ENCODE measurements at regions of chr5 and their contacts with region 1.

Region 1: DNA sequence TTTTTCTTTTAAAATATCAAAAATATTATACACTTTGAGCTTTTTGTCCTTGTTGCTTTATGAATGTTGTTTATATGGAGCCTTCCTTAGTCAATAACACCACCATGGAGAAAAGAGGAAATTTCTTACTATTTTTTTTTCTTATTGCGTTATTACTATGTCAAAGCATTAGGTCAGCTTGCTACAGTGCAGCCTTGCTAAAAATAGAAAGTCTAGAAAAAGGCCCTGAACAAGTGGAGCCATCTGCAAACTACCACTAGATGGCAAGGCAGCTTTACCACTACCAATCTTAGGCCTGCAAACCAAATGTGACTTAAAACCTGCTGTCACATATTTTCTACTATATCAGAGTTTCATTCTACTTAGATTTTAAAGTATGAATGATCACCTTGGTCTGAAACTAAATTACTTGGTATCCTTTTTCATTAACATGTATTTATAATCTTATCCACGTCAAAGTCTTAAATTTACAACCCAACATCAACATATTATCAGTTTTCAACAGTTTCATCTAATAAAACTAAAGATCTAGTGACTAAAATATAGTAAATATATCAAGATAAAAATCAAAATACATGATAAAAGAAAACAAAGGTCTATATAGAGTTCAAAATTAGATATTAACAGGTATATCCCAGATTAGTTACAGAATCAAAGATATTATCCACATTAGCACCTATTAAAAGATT is 113.1 kb upstream of the ACOT12 start:
- DNase-seq: peak; percentile 32
- H3K4me3 Mint-ChIP-seq: no peak overlapping the region
- H3K27ac Mint-ChIP-seq: no peak overlapping the region
- H3K4me1 Mint-ChIP-seq: peaks cover 11% of the 10 kb centered on the region
- H3K27me3 Mint-ChIP-seq: no peaks in the 10 kb centered on the region

Region 2: GRCh38 chr5:81751009-81751835 is 244.2 kb after region 1 on chr5 and contains the start of gene SSBP2:
- intact Hi-C with region 1: loop called (anchors 1 kb)
- DNase-seq: peak; percentile 99
- H3K4me3 Mint-ChIP-seq: peak within 1 kb of the TSS; percentile 92
- H3K27ac Mint-ChIP-seq: peak within 1 kb of the TSS; percentile 93
- H3K4me1 Mint-ChIP-seq: peaks cover 30% of the 10 kb centered on the region
- H3K27me3 Mint-ChIP-seq: peaks cover 15% of the 10 kb centered on the region
- total RNA-seq, gene SSBP2: 24.3 and 29.5 TPM in 2 replicates

Region 3: DNA sequence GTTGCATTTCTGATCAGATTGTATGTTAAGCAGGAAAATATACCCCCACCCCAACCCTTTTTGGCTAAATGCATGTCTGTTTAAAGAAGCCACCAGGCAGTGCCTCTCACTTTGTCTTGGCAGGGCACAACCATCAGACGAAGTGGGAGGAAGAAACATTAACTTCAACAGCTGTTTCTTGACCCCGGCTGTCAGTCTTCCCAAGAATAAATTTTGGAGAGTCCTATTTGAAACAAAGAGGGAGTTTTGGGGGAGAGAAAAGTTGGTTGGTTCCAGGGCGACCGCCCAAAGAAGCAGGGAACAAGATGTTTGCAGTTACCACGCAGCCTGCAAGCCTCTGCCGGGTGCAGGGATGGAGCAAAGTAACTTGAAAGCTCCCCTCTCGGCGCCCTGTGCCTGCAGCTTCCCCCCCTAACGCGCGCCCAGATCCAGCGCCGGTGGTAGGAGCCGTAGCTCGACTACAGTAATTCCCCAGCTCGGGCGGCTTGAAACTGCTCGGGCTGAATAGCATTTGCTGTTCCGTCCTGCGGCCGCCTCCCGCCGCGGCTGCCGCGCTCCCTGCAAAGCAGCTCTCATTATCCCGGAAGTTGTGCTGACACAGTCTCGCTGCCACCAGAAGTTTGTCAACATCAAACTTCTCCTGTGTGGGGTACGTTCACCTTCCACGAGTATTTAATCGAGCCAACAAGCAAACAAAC is 344.6 kb after region 1 on chr5:
- intact Hi-C with region 1: loop called (anchors 1 kb)
- DNase-seq: peak; percentile 88
- H3K4me3 Mint-ChIP-seq: peak overlapping the region; percentile 85
- H3K27ac Mint-ChIP-seq: peak overlapping the region; percentile 94
- H3K4me1 Mint-ChIP-seq: peaks cover 38% of the 10 kb centered on the region
- H3K27me3 Mint-ChIP-seq: no peaks in the 10 kb centered on the region

Region 4: DNA sequence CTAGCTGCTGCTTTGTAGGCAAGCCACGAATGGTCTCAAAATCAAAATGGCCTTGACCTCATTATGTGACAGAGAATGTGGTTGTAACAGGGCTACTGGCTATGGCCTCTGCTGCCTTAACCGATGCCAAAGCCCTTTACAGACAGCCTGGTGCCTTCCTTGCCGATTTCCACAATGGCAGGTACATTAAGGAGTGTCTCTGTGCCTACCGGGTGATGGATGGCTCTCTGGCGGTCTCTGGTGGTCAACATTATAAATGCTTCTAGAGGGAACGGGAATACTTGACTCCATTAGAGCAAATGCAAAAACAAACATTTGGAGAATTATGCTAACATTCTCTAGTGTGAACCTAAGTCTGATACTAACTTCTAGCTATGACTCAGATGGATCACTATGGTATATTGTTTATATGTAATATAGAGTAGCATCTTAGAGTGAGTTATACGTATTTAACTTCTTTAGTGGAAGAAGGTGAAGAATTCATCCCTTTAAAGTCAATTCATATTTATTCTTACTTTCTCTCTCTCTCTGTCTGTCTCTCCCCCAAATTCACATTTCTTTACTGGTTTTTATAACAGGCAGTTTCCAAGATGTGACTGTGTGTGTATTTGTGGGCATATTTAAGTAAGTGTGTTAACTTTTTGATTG is 718.6 kb after region 1 on chr5:
- intact Hi-C with region 1: loop called (anchors 2 kb)
- DNase-seq: peak; percentile 45
- H3K4me3 Mint-ChIP-seq: no peak overlapping the region
- H3K27ac Mint-ChIP-seq: no peak overlapping the region
- H3K4me1 Mint-ChIP-seq: peaks cover 7% of the 10 kb centered on the region
- H3K27me3 Mint-ChIP-seq: no peaks in the 10 kb centered on the region